Activated CD4-positive, alpha-beta T cell treated with anti-CD3 and anti-CD28 coated beads for 36 hours (primary cell): ENCODE measurements at regions of chr16 and their contacts with region 1.

Region 1: DNA sequence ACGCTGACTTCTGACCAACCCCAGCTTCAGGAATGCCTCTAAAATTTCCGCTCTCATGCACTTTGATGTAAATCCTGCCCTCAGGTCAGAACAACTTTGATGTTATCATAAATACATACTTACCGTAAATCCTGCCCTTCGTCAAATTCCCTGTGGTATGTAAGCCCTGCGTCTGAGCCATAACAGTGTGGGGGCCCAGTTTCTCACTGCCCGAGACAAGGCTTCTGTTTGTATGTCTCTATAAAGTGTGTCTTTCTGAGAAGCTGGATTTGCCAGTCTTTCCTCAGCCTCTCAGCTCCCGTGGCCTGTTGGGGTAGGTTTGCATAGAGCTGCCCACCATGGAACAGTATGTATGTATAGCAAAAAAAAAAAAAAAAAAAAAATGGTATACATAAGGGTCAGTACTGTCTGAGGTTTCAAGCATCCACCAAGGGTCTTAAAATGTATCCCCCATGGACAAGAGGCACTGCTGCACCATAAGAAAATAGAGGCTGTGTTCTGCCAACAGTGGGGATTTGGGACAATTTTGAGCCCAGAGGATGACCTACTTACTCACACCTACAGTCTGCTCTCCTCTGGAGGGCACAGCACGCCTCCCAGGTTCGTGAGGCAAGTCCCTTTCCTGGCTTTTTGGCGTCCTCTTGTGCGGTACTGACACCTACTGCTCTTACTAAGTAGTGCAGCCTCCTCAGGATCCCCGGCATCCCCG is 17.5 kb downstream of the PRMT7 start:
- DNase-seq: peak; percentile 87
- ATAC-seq: peak; percentile 97
- H3K4me3 Mint-ChIP-seq: no peak overlapping the region
- H3K27ac Mint-ChIP-seq: peak overlapping the region; percentile 40
- H3K4me1 Mint-ChIP-seq: peaks cover 26% of the 10 kb centered on the region
- H3K27me3 Mint-ChIP-seq: no peaks in the 10 kb centered on the region

Region 2: DNA sequence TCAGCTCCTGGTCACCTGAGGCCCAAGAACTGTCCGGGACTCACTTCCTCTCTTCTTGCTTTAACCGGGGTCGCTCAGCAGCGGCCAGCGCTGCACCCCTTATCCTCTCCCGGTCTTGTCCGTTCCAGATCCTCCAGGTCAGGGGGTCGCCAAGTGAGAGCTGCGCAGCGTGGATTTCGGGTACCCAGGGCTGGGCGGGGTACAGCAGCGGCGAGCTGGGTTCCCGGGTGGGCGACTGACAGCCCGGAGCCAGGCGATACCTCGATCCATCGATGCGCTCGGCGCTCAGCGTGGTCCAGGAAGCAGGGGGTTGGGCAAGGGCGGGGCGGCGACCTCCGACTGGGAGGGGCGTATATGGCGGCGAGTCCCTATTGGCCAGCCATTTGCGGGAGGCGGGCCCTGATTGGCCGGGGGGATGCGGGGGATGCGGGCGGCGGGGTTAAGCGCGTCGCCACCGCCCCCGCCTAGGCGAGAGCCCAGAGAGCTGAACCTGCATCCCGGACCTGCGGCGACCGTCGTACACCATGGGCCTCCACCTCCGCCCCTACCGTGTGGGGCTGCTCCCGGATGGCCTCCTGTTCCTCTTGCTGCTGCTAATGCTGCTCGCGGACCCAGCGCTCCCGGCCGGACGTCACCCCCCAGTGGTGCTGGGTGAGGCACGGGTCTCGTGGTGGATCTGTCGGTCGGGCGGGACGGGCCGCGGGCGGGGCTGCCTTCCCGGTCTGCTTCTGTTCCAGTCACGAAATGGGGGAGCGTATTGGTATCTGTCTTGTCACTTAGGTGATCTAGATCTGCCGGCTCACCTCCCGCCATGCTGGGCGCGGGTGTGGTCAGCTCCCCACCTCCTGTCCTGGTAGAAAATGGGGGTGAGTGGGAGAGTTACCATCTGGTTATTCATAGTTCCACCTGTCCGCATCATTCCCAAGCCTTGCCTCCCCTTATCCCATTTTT is 83.1 kb before region 1 on chr16 and contains the start of gene PLA2G15:
- CTCF ChIA-PET with region 1: interaction called, 16 read pairs
- POLR2A ChIA-PET with region 1: interaction called, 9 read pairs
- intact Hi-C with region 1: loop called (anchors 1 kb)
- DNase-seq: peak; percentile 98
- ATAC-seq: peak; percentile 98
- H3K4me3 Mint-ChIP-seq: peak within 1 kb of the TSS; percentile 88
- H3K27ac Mint-ChIP-seq: peak within 1 kb of the TSS; percentile 83
- H3K4me1 Mint-ChIP-seq: peaks cover 15% of the 10 kb centered on the region
- H3K27me3 Mint-ChIP-seq: no peaks in the 10 kb centered on the region
- total RNA-seq, gene PLA2G15: 6.0 to 7.0 TPM

Region 3: DNA sequence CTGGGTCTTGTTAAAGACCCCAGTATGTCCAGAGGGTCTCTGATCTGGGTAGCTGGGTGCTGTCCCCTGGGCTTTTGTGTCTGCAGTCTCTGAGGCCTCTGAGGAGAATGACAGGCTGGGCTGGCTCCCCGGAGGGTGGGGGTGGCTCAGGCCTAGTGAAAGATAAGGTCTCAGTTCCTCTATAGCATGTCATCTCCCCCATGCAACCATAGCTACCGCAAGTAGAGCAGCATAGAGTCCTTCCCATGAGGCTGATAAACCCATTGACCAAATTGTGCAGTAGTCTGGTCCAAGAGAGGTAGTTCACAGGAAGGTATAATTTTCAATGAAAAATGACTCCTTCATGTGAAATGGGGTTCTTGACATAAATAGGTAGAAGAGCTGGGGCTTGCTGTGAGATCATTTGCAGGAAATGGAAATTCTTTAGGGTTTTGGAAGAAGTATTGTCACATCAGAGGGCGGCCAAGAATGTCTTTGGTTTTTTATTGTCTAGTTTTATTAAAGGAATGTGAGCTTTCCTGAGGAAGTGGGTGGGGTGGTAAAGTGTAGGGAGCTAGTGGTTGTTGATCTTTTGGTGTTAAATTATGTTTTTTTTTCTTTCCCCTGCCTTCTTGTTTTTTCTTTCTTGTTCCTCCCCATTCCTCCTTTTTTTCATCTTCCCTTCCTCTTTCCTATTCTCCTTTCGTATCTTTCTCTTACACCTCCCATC is 38.5 kb before region 1 on chr16:
- CTCF ChIA-PET with region 1: interaction called, 14 read pairs
- POLR2A ChIA-PET with region 1: no interaction called
- intact Hi-C with region 1: no loop called
- DNase-seq: peak; percentile 79
- ATAC-seq: peak; percentile 77
- H3K4me3 Mint-ChIP-seq: peak overlapping the region; percentile 0
- H3K27ac Mint-ChIP-seq: peak overlapping the region; percentile 96
- H3K4me1 Mint-ChIP-seq: peaks cover 83% of the 10 kb centered on the region
- H3K27me3 Mint-ChIP-seq: no peaks in the 10 kb centered on the region

Region 4: DNA sequence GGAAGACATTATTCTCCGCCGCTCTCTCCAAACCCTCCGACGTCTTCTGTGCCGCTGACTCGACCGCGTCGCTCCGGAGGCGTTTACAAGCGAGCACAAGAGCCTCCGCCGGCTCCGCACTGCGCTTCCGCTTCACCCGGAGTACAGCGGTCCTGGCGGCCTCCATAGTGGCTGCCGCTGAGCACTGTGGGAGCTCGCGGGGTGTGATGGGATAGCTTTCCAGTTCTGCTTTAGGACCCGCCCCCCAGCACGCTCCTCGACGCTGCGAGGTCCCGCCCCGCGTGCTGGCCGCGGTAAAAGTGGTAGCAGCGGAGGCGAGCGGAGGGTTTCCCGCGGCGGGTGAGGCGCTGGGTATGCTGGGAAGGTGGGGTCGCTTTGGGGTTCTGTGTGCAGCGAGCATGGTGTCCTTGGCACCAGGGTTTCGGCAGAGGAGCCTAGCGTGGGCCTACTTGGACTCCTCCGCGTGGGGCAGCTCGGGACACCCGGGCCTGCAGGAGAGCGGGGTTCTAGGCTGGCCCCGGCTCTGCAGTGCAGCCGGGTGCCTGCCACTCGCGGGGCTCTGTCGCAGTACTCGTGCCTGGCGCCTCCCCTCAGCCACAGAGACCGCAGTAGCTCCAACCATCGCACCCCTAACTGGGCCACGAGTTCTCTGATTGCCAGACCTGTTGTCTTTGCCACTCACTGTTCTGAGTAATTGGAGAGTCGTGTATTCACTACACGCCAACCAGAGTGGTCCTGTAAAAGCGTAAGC is 17.4 kb before region 1 on chr16 and contains the starts of genes PRMT7 and SLC7A6OS:
- CTCF ChIA-PET with region 1: interaction called, 15 read pairs
- POLR2A ChIA-PET with region 1: no interaction called
- intact Hi-C with region 1: loop called in 1 of 2 experiments (anchors 1 kb)
- DNase-seq: peak; percentile 97
- ATAC-seq: peak; percentile 99
- H3K4me3 Mint-ChIP-seq: peak within 1 kb of the TSS; percentile 90
- H3K27ac Mint-ChIP-seq: peak within 1 kb of the TSS; percentile 92
- H3K4me1 Mint-ChIP-seq: peaks cover 42% of the 10 kb centered on the region
- H3K27me3 Mint-ChIP-seq: no peaks in the 10 kb centered on the region
- total RNA-seq, gene PRMT7: 62.7 to 70.7 TPM
- total RNA-seq, gene SLC7A6OS: 17.4 to 21.7 TPM

Region 5: GRCh38 chr16:68338326-68339119 is 10.2 kb after region 1 on chr16:
- CTCF ChIA-PET with region 1: interaction called, 16 read pairs
- POLR2A ChIA-PET with region 1: no interaction called
- intact Hi-C with region 1: no loop called
- DNase-seq: no peak
- ATAC-seq: no peak
- H3K4me3 Mint-ChIP-seq: no peak overlapping the region
- H3K27ac Mint-ChIP-seq: no peak overlapping the region
- H3K4me1 Mint-ChIP-seq: no peaks in the 10 kb centered on the region
- H3K27me3 Mint-ChIP-seq: no peaks in the 10 kb centered on the region